ENCODE measurements at regions of chr3 and their contacts with region 1.

Region 1: DNA sequence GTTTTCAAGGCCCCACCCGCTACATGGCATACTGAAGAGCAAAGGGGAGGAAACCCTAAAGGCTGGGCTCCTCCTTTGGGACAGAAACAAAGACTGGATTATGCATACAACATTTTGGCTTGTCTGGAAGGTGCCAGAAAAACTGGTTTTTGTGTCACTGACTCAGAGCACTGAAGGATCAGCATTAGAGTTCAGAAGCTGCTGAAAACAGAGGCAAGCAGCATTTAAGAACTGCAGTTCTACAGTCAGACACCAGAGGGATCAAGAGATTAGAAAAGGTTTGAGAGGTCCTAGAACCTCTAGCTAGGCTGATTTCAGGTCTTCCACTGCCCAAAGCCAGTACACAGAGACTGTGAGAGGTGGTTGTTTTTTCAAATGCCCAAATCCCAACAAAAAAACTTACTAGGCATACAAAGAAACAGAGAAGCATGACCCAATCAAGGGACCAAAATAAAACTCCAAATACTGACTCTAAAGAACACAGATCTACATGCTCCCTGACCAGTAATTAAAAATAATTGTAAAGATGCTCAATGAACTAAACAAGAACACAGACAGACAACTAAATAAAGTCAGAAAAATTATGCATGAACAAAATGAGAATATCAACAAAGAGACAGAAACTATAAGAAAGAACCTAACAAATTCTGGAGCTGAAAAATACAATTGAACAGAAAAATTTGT is 91.2 kb downstream of the SENP2 start:
- DNase-seq: no peak
- ATAC-seq: peak in 1 of 8 donors; percentile 48
- H3K4me3 ChIP-seq: no peak overlapping the region
- H3K27ac ChIP-seq: no peak overlapping the region
- H3K4me1 ChIP-seq: no peaks in the 10 kb centered on the region
- H3K27me3 ChIP-seq: no peaks in the 10 kb centered on the region
- CTCF ChIP-seq: peak in 8 of 9 donors; percentile 12 to 67 (median 58)

Region 2: DNA sequence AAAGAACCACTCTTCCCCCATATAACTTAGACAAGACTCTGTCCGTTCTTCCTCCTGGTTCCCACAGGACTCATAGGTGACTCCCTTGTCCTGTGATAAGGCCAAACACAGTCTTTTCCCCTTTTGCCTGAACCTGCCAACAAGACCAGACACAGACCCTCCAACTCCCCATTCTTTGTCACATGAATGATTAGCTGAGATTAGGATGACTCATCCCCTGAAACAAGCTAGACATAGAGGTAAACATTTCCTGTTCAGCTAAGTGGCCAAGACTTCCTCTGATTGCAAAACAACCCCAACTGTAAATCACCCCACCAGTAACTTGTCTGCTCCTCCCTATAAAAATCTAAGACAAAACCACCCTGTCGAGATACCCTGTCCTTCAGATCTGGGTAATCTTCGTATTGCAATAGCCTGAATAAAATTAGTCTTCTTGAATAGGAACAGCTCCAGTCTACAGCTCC is 1591.9 kb before region 1 on chr3:
- intact Hi-C with region 1: no loop called
- DNase-seq: no peak
- ATAC-seq: no peak
- H3K4me3 ChIP-seq: no peak overlapping the region
- H3K27ac ChIP-seq: no peak overlapping the region
- H3K4me1 ChIP-seq: no peaks in the 10 kb centered on the region
- H3K27me3 ChIP-seq: no peaks in the 10 kb centered on the region
- CTCF ChIP-seq: no peak

Region 3: DNA sequence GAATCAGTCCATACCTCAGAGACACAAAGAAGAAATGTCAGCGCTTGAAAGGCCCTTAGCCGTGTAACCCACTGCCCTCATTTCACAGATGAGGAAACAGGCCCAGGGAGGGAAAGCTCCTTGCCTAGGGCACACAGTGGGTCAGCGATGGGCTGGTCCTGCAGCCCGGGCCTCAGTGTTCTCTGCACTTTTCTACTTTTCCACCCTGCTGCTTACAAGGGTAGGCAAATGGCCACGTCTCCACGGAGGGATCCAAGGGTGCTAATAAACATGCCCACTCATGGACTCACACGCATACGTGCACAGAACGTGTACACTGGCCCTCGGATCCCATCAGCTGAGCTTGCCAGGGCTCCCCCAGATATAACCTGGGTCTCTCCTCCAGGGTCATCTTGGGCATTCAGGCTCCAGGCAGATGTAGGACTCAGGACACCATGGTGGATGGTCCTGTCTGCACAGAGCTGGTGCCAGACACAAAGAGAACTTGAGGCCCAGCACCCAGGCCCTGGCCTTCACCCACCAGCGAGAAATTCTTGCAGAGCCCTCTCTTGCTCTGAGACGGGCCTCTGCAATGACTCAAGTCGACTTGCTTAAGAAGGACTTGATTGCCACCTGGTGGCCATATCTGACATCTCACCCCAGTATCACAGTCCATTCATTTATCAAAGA is 899.8 kb before region 1 on chr3:
- intact Hi-C with region 1: no loop called
- DNase-seq: peak; percentile 60 to 91
- ATAC-seq: peak; percentile 80 to 90 (median 86)
- H3K4me3 ChIP-seq: no peak overlapping the region
- H3K27ac ChIP-seq: no peak overlapping the region
- H3K4me1 ChIP-seq: peaks cover 0 to 23% (median 11%) of the 10 kb centered on the region in 9 donors
- H3K27me3 ChIP-seq: peaks cover 0 to 29% (median 17%) of the 10 kb centered on the region in 7 donors
- CTCF ChIP-seq: peak; percentile 76 to 90 (median 85)

Region 4: DNA sequence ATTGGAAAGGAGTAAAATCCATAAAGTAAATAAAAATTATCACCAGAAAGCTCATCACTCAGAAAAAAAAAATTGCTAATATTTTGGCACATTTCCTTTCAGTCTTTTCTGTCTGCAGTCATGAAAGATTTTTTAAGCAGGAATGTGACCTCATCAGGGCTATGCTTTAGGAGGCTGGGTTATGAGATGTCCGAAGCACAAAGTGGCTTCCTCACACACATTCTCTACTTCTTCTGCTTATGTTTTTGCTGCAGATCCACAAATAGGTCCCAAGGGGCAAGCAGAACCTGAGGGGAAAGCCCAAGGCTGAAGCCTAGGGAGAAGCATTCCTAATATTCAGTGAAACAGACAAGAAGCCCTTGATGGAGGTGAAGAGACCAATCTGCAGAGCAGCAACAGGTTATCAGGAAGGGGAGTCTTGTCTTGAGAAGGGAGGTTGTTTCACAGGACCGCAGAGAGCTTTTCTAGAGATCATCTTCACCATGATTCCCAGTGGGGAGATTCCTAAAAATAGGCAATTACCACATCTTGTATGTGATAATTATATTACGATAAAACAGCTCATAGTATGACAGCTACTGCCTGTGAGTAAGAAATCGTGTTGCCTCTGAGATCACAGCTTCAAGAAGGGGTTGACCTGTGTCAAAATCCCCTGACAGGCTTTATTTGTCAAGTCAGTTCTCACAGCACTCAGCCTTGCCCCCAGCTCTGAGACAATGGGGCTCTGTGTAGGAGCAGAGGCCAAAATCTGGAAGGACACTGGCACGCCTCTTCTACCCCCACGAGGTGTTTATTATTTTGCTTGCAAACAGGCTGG is 87.1 kb after region 1 on chr3:
- intact Hi-C with region 1: loop called in 2 of 10 experiments (anchors 5 to 10 kb)
- DNase-seq: no peak
- ATAC-seq: peak in 5 of 8 donors; percentile 41 to 57 (median 56)
- H3K4me3 ChIP-seq: peak overlapping the region in 5 of 10 donors; percentile 1 to 27 (median 11)
- H3K27ac ChIP-seq: peak overlapping the region in 6 of 10 donors; percentile 6 to 57 (median 29)
- H3K4me1 ChIP-seq: peaks cover 6 to 40% (median 23%) of the 10 kb centered on the region in 9 donors
- H3K27me3 ChIP-seq: no peaks in the 10 kb centered on the region
- CTCF ChIP-seq: no peak

Region 5: GRCh38 chr3:185770109-185770508 is 92.8 kb after region 1 on chr3:
- intact Hi-C with region 1: loop called in 4 of 10 experiments (anchors 5 to 10 kb)
- DNase-seq: no peak
- ATAC-seq: no peak
- H3K4me3 ChIP-seq: no peak overlapping the region
- H3K27ac ChIP-seq: no peak overlapping the region
- H3K4me1 ChIP-seq: peaks cover 0 to 14% (median 11%) of the 10 kb centered on the region in 9 donors
- H3K27me3 ChIP-seq: no peaks in the 10 kb centered on the region
- CTCF ChIP-seq: no peak

Region 6: DNA sequence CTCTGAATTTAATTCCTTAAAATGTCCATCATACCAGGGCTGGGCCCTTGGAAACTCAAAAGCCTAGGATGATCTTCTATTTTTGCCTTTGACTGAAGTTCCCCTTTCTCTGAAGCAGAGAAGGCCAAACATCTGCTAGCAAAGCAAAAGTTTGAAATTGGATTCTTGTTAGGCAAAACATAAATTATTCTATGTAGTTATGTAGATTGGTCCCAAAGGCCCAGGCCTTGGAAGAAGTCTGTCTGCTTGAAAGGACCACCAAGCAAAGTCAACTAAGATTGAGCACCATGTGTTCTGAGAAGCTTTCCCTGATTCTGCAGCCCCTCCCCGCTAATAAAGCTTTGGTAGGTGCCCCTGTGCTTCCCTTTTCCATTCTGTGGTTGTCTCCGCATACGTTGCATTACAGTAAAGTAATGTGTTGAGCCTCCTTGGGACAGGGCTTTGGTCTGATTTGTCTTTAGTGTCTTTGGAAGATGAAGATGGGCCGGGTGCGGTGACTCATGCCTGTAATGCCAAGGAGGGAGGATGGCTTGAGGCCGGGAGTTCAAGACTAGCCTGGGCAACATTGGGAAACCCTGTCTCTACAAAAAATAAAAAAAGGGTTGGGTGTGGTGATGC is 1405.6 kb after region 1 on chr3:
- intact Hi-C with region 1: loop called in 1 of 10 experiments (anchors 5 kb)
- DNase-seq: no peak
- ATAC-seq: no peak
- H3K4me3 ChIP-seq: no peak overlapping the region
- H3K27ac ChIP-seq: no peak overlapping the region
- H3K4me1 ChIP-seq: peaks cover 0 to 20% (median 5%) of the 10 kb centered on the region in 9 donors
- H3K27me3 ChIP-seq: no peaks in the 10 kb centered on the region
- CTCF ChIP-seq: no peak